Naive thymus-derived CD4-positive, alpha-beta T cell (primary cell): ENCODE measurements at regions of chr1 and their contacts with region 1.

Region 1: GRCh38 chr1:182604169-182605164 is at the start of gene RGS16:
- DNase-seq: peak; percentile 69 to 95 (median 76)
- ATAC-seq: peak; percentile 93
- H3K4me3 ChIP-seq: peak within 1 kb of the TSS; percentile 59
- H3K4me3 Mint-ChIP-seq: peak within 1 kb of the TSS in 8 of 10 donors; percentile 6 to 87 (median 82)
- H3K27ac ChIP-seq: peak within 1 kb of the TSS; percentile 37
- H3K27ac Mint-ChIP-seq: peak within 1 kb of the TSS in 6 of 9 donors; percentile 13 to 84 (median 71)
- H3K4me1 ChIP-seq: peaks cover 13 to 26% of the 10 kb centered on the region in 2 donors
- H3K4me1 Mint-ChIP-seq: peaks cover 4 to 37% (median 18%) of the 10 kb centered on the region in 7 donors
- H3K27me3 ChIP-seq: no peaks in the 10 kb centered on the region
- H3K27me3 Mint-ChIP-seq: peaks cover 0 to 12% (median 7%) of the 10 kb centered on the region in 5 donors
- total RNA-seq, gene RGS16: 0.49 to 17.5 (median 3.4) TPM

Region 2: DNA sequence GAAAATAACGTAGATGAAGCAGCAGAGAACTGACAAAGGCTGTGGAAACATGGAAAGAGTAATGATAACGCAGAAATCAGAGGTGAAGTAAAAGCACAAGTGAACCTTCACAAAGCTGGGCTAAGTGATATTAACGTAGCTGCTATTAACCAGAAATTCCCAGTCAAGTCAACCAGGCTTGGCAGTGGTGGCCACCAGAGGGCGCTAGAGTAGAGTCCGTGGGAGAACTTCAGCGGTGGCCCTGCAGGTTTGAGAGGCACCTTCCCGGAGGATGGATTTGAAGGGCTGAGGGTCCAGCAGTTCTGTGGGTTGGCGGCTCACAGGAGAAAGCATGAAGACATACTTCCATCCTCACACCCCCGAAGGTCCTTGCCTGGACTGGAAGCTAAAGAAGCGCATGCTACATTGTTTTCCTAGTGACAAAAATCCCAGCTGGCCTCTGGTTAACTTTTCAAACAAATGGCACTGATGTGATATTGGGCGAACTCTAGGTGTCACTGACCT is 461.3 kb before region 1 on chr1:
- CTCF ChIA-PET with region 1: interaction called, 4 read pairs
- POLR2A ChIA-PET with region 1: no interaction called
- intact Hi-C with region 1: loop called in 1 of 2 experiments (anchors 10 kb)
- DNase-seq: peak; percentile 62 to 90 (median 80)
- ATAC-seq: peak; percentile 75
- H3K4me3 ChIP-seq: no peak overlapping the region
- H3K4me3 Mint-ChIP-seq: no peak overlapping the region
- H3K27ac ChIP-seq: no peak overlapping the region
- H3K27ac Mint-ChIP-seq: peak overlapping the region in 3 of 9 donors; percentile 5 to 8 (median 5)
- H3K4me1 ChIP-seq: no peaks in the 10 kb centered on the region
- H3K4me1 Mint-ChIP-seq: peaks cover 6 to 37% (median 11%) of the 10 kb centered on the region in 7 donors
- H3K27me3 ChIP-seq: no peaks in the 10 kb centered on the region
- H3K27me3 Mint-ChIP-seq: peaks cover 0 to 12% (median 5%) of the 10 kb centered on the region in 5 donors

Region 3: GRCh38 chr1:182446033-182446669 is 158.3 kb before region 1 on chr1:
- CTCF ChIA-PET with region 1: interaction called, 3 read pairs
- POLR2A ChIA-PET with region 1: no interaction called
- intact Hi-C with region 1: loop called (anchors 5 kb)
- DNase-seq: peak in 3 of 9 donors; percentile 12 to 21 (median 13)
- ATAC-seq: peak; percentile 77
- H3K4me3 ChIP-seq: no peak overlapping the region
- H3K4me3 Mint-ChIP-seq: no peak overlapping the region
- H3K27ac ChIP-seq: no peak overlapping the region
- H3K27ac Mint-ChIP-seq: no peak overlapping the region
- H3K4me1 ChIP-seq: no peaks in the 10 kb centered on the region
- H3K4me1 Mint-ChIP-seq: peaks cover 0 to 6% (median 5%) of the 10 kb centered on the region in 7 donors
- H3K27me3 ChIP-seq: no peaks in the 10 kb centered on the region
- H3K27me3 Mint-ChIP-seq: peaks cover 0 to 6% (median 0%) of the 10 kb centered on the region in 5 donors

Region 4: DNA sequence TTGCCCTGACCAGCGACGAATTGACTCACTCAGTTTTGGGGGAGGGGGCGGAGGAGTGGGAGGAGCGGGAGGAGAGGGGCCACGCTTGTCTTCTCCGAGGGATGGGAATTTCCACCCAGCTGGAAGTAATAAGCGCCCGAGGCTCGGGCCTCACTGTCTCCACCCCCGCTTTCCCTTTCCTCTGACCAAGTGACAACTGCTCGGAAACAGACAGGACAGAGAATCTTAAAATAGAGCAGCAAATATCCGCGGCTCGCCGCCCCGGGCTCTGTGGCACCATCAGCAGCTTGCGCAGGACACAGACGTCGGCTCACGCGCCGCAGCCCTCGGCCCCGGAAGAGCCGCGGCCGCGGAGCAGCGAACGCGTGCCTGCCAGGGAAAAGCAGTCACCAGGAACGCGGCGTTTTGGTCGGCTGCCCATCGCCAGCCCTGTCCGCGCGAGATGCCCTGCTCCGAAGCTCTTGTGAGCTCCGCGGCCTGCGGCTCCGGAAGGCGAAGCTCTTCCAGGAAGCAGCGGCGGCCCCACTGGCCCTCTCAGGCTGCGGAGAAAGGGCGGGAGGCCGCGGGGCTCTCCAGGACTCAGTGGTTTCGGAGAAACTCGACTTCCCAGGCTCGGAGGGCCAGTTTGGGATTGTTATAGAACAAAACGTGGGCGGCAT is 10.5 kb after region 1 on chr1:
- CTCF ChIA-PET with region 1: interaction called, 25 read pairs
- POLR2A ChIA-PET with region 1: interaction called, 26 read pairs
- intact Hi-C with region 1: loop called (anchors 1 kb)
- DNase-seq: peak in 7 of 9 donors; percentile 26 to 68 (median 35)
- ATAC-seq: peak; percentile 14
- H3K4me3 ChIP-seq: peak overlapping the region; percentile 54
- H3K4me3 Mint-ChIP-seq: peak overlapping the region; percentile 74 to 87 (median 84)
- H3K27ac ChIP-seq: peak overlapping the region; percentile 15
- H3K27ac Mint-ChIP-seq: peak overlapping the region in 8 of 9 donors; percentile 74 to 95 (median 92)
- H3K4me1 ChIP-seq: peaks cover 15 to 32% of the 10 kb centered on the region in 2 donors
- H3K4me1 Mint-ChIP-seq: peaks cover 28 to 68% (median 32%) of the 10 kb centered on the region in 7 donors
- H3K27me3 ChIP-seq: no peaks in the 10 kb centered on the region
- H3K27me3 Mint-ChIP-seq: peaks cover 0 to 75% (median 30%) of the 10 kb centered on the region in 5 donors

Region 5: DNA sequence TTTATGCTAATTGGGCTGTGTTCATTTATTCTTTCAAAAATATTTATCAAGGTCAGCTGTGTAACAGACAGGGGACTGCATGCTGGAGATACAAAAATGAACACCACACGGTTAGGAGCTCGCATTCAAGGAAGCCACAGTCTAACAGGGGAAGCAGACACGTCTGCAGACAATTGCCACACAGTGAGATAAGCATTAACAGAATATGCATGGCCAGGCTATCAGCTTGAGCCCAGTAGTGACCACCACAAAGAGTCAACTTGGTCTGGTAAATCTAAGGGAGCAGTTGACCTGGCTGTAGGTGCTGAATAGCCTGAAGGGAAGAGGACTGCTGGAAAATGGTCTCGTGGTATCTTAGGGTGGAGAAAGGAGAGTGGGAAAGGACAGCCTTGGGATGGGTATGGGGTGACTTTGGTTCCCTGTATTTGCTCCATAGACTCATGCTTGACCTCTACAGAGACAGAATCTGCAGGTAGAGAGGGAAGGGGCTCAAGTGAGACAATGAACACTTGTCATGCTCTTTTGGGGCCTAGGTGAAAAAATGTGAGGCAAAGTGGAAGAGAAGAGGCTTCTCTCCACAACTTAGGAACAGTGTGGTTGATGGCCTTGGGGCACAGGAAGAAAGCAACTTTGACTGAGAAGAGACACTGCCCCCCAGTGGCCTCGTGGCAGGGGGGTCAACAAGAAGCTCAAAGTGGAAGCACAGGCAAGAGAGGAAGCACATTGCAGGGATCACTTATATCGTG is 177.5 kb after region 1 on chr1:
- CTCF ChIA-PET with region 1: interaction called, 403 read pairs
- POLR2A ChIA-PET with region 1: interaction called, 11 read pairs
- intact Hi-C with region 1: loop called (anchors 1 kb)
- DNase-seq: peak; percentile 33 to 72 (median 54)
- ATAC-seq: peak; percentile 84
- H3K4me3 ChIP-seq: no peak overlapping the region
- H3K4me3 Mint-ChIP-seq: no peak overlapping the region
- H3K27ac ChIP-seq: no peak overlapping the region
- H3K27ac Mint-ChIP-seq: peak overlapping the region in 3 of 9 donors; percentile 33 to 55 (median 39)
- H3K4me1 ChIP-seq: no peaks in the 10 kb centered on the region
- H3K4me1 Mint-ChIP-seq: peaks cover 4 to 20% (median 5%) of the 10 kb centered on the region in 7 donors
- H3K27me3 ChIP-seq: no peaks in the 10 kb centered on the region
- H3K27me3 Mint-ChIP-seq: peaks cover 0 to 12% (median 0%) of the 10 kb centered on the region in 5 donors

Region 6: GRCh38 chr1:182839209-182840065 is 235.0 kb after region 1 on chr1 and contains the start of gene DHX9:
- CTCF ChIA-PET with region 1: no interaction called
- POLR2A ChIA-PET with region 1: no interaction called
- intact Hi-C with region 1: loop called (anchors 1 kb)
- DNase-seq: peak; percentile 93 to 100 (median 97)
- ATAC-seq: peak; percentile 89
- H3K4me3 ChIP-seq: peak within 1 kb of the TSS; percentile 99
- H3K4me3 Mint-ChIP-seq: peak within 1 kb of the TSS; percentile 91 to 100 (median 98)
- H3K27ac ChIP-seq: peak within 1 kb of the TSS; percentile 84
- H3K27ac Mint-ChIP-seq: peak within 1 kb of the TSS; percentile 92 to 100 (median 98)
- H3K4me1 ChIP-seq: peaks cover 22 to 33% of the 10 kb centered on the region in 2 donors
- H3K4me1 Mint-ChIP-seq: peaks cover 36 to 61% (median 54%) of the 10 kb centered on the region in 7 donors
- H3K27me3 ChIP-seq: no peaks in the 10 kb centered on the region
- H3K27me3 Mint-ChIP-seq: peaks cover 0 to 9% (median 0%) of the 10 kb centered on the region in 5 donors
- total RNA-seq, gene DHX9: 207 to 299 (median 227) TPM